BJ (cell line): ENCODE measurements at regions of chr10 and their contacts with region 1.

Region 1: DNA sequence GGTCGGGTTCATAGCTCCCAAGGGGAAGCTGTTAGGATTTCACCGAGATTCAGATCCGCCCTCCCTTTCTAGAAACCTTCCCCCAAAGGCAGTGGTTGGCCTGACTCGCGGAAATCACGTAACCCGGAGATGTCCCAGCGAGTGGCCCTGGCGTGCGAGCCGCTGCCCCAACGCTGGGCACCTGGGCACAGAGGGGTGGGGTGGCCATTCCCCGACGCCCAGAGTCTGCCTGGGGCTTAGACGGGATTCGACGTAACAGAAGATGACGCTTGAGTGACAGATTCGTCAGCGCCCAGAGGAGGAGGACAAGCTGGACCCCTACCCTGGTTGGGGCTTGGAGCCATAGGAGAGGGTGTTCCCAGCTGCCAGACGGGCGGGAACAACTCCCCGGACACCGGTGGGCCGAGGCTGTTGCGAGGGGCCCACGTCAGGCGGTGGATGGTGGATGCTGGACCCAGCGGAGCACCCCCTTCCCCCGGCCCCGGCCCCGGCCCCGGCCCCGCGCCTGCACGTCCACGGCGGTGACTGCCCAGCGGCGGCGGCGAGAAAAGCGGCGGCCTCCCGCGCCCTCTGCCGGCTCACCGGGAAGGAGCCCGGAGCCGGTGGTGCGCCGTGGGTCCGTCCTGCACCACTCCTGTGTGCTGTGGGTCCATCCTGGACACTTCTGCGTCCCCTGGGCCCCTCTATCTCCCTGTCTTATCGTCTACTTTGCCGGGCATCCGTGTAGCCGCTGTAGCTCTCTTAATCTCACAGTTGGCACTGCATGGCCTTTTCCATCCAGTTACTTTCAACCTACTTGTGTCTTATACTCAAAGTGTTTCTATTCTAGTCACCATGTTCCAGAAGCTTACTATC is 35.4 kb upstream of the KNDC1 start:
- DNase-seq: no peak
- H3K4me3 ChIP-seq: no peak overlapping the region
- H3K27me3 ChIP-seq: no peaks in the 10 kb centered on the region
- CTCF ChIP-seq: peak; percentile 58

Region 2: GRCh38 chr10:132837905-132838304 is 286.7 kb before region 1 on chr10:
- CTCF ChIA-PET with region 1: interaction called, 16 read pairs
- POLR2A ChIA-PET with region 1: no interaction called
- DNase-seq: no peak
- H3K4me3 ChIP-seq: no peak overlapping the region
- H3K27me3 ChIP-seq: peaks cover 4% of the 10 kb centered on the region; the same call in 1 of the 2 replicates
- CTCF ChIP-seq: no peak

Region 3: GRCh38 chr10:132904181-132904819 is 220.3 kb before region 1 on chr10:
- CTCF ChIA-PET with region 1: interaction called, 19 read pairs
- POLR2A ChIA-PET with region 1: no interaction called
- DNase-seq: no peak
- H3K4me3 ChIP-seq: no peak overlapping the region
- H3K27me3 ChIP-seq: no peaks in the 10 kb centered on the region
- CTCF ChIP-seq: peak; percentile 84

Region 4: DNA sequence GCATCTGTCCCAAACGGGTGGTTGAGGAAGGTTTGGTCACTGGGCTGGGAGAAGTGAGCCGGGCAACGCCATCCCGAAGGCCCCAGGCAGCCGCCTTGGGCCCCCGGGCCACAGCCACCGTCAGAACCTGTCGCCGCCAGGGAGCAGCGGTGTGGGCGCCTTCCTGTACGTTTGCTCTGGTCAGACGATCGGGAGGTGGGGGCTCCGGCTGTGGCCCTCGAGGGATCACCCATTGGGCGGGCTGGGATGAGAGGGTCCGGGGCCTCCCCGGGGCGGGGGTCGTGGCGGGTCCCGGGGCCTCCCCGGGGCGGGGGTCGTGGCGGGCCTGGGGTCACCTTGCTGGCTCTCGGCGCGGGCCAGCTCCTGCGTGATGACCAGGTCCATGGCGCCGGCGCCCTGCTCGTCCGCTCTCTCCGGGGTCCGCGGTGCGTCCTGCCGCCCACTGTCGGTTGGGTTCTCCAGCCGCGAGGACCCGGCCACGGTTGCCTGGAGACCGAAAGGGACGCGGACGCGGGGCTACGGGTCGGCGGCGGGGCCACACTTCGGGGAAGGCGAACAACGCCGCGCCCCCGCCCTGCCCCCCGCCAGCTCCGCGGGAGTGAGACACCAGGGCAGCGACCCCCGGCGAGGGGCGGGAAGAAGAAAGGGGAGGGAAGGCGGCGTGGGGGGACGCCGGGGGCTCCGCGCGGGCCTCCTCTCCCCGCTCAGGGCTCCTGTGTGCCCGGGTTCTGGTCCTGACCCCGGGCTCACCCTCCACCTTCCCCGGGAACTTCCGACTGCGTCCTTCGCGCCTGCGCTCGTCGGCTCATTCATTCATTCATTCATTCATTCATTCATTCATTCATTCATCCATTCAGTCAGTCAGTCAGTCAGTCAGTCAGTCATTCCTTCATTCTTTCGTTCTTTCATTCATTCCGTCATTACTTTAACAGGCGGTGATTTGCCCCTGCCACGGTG is 182.2 kb before region 1 on chr10 and contains the start of gene CFAP46:
- CTCF ChIA-PET with region 1: interaction called, 12 read pairs
- POLR2A ChIA-PET with region 1: no interaction called
- DNase-seq: no peak
- H3K4me3 ChIP-seq: peak within 1 kb of the TSS; percentile 55
- H3K27me3 ChIP-seq: no peaks in the 10 kb centered on the region
- CTCF ChIP-seq: 0 out of 2 replicates have a peak, but pooled peaks have one; percentile 7
- polyA plus RNA-seq, gene CFAP46: 1.8 and 2.0 TPM in 2 replicates

Region 5: DNA sequence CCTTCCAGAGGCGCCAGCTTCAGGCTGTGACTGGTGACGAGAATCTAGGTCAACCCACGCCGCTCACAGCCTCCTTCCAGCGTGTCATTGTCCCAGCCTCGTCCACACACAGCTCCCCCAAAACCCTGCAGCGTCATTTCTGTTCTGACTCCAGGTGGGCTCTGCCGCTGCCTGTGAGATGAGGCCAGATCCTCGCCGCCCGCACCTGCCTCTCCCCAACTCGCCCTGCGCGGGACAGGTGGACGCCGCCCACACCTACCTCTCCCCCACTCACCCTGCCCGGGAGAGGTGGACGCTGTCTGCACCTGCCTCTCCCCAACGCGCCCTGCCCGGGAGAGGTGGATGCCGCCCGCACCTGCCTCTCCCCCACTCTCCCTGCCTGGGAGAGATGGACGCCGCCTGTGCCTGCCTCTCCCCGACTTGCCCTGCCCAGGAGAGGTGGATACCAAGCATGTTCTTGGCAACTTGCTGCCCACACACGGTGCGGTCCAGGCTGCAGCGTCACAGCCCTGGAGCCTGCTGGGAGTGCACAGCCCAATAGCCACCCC is 150.3 kb before region 1 on chr10:
- CTCF ChIA-PET with region 1: no interaction called
- POLR2A ChIA-PET with region 1: no interaction called
- DNase-seq: no peak
- H3K4me3 ChIP-seq: no peak overlapping the region
- H3K27me3 ChIP-seq: peaks cover 13% of the 10 kb centered on the region
- CTCF ChIP-seq: no peak

Region 6: DNA sequence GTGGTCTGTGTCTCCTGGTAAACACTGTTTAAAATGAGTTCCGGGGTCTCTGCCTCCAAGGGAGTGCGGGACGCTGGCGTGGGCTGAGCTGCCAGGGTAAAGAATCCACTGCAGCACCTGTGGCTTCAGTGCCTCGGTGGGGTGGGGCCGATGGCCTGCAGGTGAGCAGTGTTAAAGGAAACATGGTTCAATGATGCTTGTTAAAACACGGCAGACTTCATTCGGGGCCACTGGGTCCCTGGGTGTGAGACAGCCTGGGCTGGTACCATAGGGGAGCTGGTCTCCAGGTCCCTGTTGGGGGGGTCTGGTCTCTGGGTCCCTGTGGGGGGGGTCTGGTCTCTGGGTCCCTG is 10.5 kb after region 1 on chr10:
- CTCF ChIA-PET with region 1: no interaction called
- POLR2A ChIA-PET with region 1: no interaction called
- DNase-seq: no peak
- H3K4me3 ChIP-seq: no peak overlapping the region
- H3K27me3 ChIP-seq: no peaks in the 10 kb centered on the region
- CTCF ChIP-seq: no peak

Region 7: GRCh38 chr10:133324198-133324792 is 199.7 kb after region 1 on chr10:
- CTCF ChIA-PET with region 1: no interaction called
- POLR2A ChIA-PET with region 1: no interaction called
- DNase-seq: no peak
- H3K4me3 ChIP-seq: no peak overlapping the region
- H3K27me3 ChIP-seq: peaks cover 8% of the 10 kb centered on the region
- CTCF ChIP-seq: no peak